PC-3 (cell line): ENCODE measurements at regions of chr7 and their contacts with region 1.

Region 1: GRCh38 chr7:38908759-38909335 is at the start of gene VPS41:
- DNase-seq: peak; percentile 77
- ATAC-seq: peak; percentile 98
- H3K4me3 ChIP-seq: peak within 1 kb of the TSS; percentile 86
- H3K27ac ChIP-seq: no peak within 1 kb of the TSS
- H3K4me1 ChIP-seq: peaks cover 14% of the 10 kb centered on the region; the same call in 1 of the 2 replicates
- H3K27me3 ChIP-seq: no peaks in the 10 kb centered on the region
- CTCF ChIP-seq: no peak
- total RNA-seq, gene VPS41: 23.2 and 35.2 TPM in 2 replicates

Region 2: DNA sequence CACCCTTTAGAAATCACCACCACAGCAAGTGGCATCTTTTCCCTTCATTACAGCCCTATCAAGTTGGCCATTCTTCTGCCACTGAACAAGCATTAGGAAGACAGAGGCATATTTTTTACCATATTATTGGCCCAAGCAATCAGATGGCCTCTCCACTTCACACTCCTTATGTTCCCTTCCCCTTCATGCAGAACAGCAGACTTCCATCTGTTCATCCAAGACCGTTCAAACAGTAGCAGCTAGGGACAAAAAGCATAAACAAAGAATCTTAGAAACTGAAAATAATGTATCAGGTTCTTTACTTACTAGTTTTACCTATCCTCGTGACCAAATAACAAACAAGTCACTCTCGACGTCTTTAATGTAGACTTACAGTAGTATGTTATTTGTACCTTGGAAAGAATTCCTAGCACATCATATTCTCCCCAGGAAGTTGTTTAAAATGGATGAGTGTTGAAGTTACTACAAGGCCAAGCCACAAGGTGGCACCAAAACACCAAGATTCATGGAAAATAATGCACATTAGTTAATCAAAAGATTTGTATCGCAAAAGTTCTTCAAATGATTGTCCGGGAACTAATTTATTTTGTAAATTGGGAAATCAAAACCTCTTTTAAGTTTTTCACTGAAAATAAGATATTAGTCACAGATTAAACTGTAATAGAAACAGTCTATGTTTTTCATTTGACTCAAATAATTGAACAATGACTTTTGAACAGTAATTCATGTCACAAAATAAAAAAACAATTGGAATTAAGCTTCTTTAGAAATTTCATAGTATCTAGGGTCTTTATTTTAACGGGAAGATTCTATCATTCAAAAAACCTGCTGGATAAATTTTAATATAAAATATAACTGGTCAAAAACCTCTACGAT is 112.0 kb before region 1 on chr7:
- CTCF ChIA-PET with region 1: no interaction called
- POLR2A ChIA-PET with region 1: no interaction called
- intact Hi-C with region 1: loop called (anchors 10 kb)
- DNase-seq: peak; percentile 77
- ATAC-seq: peak; percentile 53
- H3K4me3 ChIP-seq: no peak overlapping the region
- H3K27ac ChIP-seq: no peak overlapping the region
- H3K4me1 ChIP-seq: no peaks in the 10 kb centered on the region
- H3K27me3 ChIP-seq: no peaks in the 10 kb centered on the region
- CTCF ChIP-seq: peak; percentile 89

Region 3: DNA sequence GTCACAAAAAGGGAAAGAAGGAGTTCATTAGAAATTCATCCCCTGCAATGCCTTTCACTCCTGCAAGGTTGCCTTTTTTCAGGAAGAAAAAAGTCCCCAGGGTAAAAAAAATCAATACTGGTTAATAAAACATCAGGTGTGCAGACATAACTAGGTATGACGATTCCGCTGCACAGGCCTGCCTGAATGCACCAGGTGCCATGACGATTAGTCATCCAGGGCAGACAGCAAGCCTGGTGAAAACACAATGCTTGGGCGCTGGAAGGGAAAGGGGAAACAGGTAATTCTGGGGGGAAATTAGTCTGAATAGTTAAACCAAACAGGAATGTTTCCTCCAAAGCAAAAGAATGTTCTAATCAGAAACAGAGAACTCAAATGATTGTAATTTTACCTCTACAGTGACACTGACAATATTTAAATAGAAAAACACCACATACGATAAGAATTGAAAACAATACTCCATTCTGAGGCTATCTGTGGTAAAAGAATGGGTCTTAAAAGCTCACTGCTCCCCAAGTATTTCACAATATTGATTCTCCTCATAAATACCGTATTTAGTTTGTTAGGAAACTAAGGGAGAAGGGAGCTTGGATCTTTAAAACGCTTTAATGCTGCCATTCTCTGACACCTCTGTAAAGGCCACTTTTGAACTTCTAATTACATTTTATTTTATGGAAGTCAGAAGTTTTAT is 45.1 kb before region 1 on chr7:
- CTCF ChIA-PET with region 1: no interaction called
- POLR2A ChIA-PET with region 1: no interaction called
- intact Hi-C with region 1: loop called (anchors 2 kb)
- DNase-seq: peak; percentile 82
- ATAC-seq: peak; percentile 89
- H3K4me3 ChIP-seq: no peak overlapping the region
- H3K27ac ChIP-seq: 0 out of 2 replicates have a peak overlapping the region, but pooled peaks have one; percentile 16
- H3K4me1 ChIP-seq: peaks cover 21% of the 10 kb centered on the region
- H3K27me3 ChIP-seq: no peaks in the 10 kb centered on the region
- CTCF ChIP-seq: no peak

Region 4: GRCh38 chr7:39113360-39113759 is 204.5 kb after region 1 on chr7:
- CTCF ChIA-PET with region 1: no interaction called
- POLR2A ChIA-PET with region 1: no interaction called
- intact Hi-C with region 1: no loop called
- DNase-seq: no peak
- ATAC-seq: no peak
- H3K4me3 ChIP-seq: no peak overlapping the region
- H3K27ac ChIP-seq: no peak overlapping the region
- H3K4me1 ChIP-seq: no peaks in the 10 kb centered on the region
- H3K27me3 ChIP-seq: no peaks in the 10 kb centered on the region; the same call in 1 of the 2 replicates
- CTCF ChIP-seq: no peak